PC-3 (cell line): ENCODE measurements at regions of chr1 and their contacts with region 1.

Region 1: GRCh38 chr1:174999216-174999925 is 376 bp upstream of the CACYBP start:
- DNase-seq: peak; percentile 95
- ATAC-seq: peak; percentile 77
- H3K4me3 ChIP-seq: peak overlapping the region; percentile 82
- H3K27ac ChIP-seq: peak overlapping the region; percentile 94
- H3K4me1 ChIP-seq: peaks cover 47% of the 10 kb centered on the region
- H3K27me3 ChIP-seq: no peaks in the 10 kb centered on the region
- CTCF ChIP-seq: no peak

Region 2: GRCh38 chr1:174769961-174770549 is 229.3 kb before region 1 on chr1:
- CTCF ChIA-PET with region 1: no interaction called
- POLR2A ChIA-PET with region 1: no interaction called
- intact Hi-C with region 1: loop called (anchors 5 kb)
- DNase-seq: peak; percentile 54
- ATAC-seq: no peak
- H3K4me3 ChIP-seq: no peak overlapping the region
- H3K27ac ChIP-seq: no peak overlapping the region
- H3K4me1 ChIP-seq: no peaks in the 10 kb centered on the region
- H3K27me3 ChIP-seq: no peaks in the 10 kb centered on the region
- CTCF ChIP-seq: peak; percentile 74

Region 3: DNA sequence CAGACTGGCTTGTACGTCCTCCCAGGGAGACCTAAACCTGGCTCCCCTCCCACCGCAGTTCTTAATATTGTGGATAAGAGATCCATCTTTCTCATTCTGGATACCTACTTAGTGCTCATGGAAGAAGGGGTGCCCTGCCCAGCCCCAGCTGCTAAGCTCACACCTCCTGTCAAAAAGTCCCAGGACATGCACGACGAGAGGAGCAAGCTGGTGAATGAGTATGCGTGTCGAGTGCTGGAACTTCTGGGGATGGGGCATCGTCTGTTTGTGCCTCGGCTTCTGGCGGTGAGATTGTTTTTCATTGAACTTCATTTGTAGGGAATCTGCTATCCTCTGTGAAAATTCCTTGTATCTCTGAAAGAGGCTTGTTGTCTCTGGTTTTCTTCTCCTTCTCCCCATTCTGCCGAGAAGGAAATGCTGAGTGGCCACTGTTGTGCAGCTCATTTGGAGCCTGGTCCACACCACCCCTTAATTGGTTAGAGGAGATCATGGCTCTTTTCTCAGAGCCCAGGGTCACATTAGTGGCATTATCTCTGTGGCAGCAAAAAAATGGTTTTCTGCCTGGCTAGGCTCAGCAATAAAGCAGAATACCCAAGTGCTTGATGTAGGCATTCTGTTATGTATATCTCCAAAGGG is 199.0 kb before region 1 on chr1:
- CTCF ChIA-PET with region 1: no interaction called
- POLR2A ChIA-PET with region 1: no interaction called
- intact Hi-C with region 1: loop called (anchors 2 kb)
- DNase-seq: no peak
- ATAC-seq: no peak
- H3K4me3 ChIP-seq: peak overlapping the region; percentile 70
- H3K27ac ChIP-seq: no peak overlapping the region
- H3K4me1 ChIP-seq: peaks cover 18% of the 10 kb centered on the region
- H3K27me3 ChIP-seq: no peaks in the 10 kb centered on the region
- CTCF ChIP-seq: no peak

Region 4: GRCh38 chr1:174883409-174883808 is 116.0 kb before region 1 on chr1:
- CTCF ChIA-PET with region 1: interaction called, 4 read pairs
- POLR2A ChIA-PET with region 1: no interaction called
- intact Hi-C with region 1: loop called (anchors 1 kb)
- DNase-seq: peak; percentile 65
- ATAC-seq: peak; percentile 92
- H3K4me3 ChIP-seq: no peak overlapping the region
- H3K27ac ChIP-seq: no peak overlapping the region
- H3K4me1 ChIP-seq: no peaks in the 10 kb centered on the region
- H3K27me3 ChIP-seq: no peaks in the 10 kb centered on the region
- CTCF ChIP-seq: peak; percentile 50

Region 5: DNA sequence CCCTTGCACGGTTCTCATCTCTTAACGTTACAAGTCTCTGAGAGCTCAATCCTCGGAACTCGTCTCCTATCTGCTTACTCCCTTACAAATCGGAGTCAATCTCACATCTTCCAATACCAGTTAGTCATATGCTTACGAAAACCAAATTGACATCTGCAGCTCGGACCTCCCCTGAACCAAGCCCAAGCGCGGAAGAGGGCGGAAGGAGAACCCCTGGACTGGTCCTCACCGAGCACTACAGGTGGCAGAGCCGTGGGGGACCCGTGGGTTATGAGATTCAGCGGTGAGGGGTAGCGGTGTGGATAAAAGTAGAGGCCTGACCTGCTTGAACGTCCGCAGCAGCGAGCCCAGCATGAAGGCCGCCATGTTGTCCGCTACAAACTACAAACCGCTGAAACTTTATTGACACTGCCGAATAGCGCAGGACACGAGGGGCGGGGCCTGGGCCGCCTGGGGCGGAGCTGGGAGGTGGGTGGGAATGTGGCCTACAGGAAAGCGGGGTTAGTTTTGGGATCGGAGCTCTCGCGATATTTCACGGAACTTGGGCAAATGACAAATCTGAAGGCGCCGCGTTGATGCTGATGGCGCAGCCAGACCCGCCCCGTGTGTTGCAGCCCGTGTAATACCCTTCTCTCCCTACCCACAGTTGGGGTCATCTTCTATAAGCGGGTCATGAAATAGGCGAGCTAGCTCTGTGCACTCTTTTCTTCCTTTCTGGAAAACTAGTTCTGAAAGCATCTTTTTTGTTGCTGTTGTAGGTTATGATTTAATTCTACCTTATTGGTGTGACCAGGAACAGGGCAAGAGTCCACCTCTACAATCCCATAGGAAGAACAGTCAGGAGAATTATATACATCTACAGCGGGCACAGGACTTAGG is 23.9 kb after region 1 on chr1 and contains the start of gene MRPS14:
- CTCF ChIA-PET with region 1: interaction called, 4 read pairs
- POLR2A ChIA-PET with region 1: no interaction called
- intact Hi-C with region 1: loop called (anchors 1 kb)
- DNase-seq: peak; percentile 94
- ATAC-seq: peak; percentile 96
- H3K4me3 ChIP-seq: peak within 1 kb of the TSS; percentile 97
- H3K27ac ChIP-seq: peak within 1 kb of the TSS; percentile 45; the same call in 1 of the 2 replicates
- H3K4me1 ChIP-seq: no peaks in the 10 kb centered on the region
- H3K27me3 ChIP-seq: no peaks in the 10 kb centered on the region
- CTCF ChIP-seq: no peak
- total RNA-seq, gene MRPS14: 18.8 and 21.8 TPM in 2 replicates